CD4-positive, alpha-beta memory T cell (primary cell): ENCODE measurements at regions of chr10 and their contacts with region 1.

Region 1: DNA sequence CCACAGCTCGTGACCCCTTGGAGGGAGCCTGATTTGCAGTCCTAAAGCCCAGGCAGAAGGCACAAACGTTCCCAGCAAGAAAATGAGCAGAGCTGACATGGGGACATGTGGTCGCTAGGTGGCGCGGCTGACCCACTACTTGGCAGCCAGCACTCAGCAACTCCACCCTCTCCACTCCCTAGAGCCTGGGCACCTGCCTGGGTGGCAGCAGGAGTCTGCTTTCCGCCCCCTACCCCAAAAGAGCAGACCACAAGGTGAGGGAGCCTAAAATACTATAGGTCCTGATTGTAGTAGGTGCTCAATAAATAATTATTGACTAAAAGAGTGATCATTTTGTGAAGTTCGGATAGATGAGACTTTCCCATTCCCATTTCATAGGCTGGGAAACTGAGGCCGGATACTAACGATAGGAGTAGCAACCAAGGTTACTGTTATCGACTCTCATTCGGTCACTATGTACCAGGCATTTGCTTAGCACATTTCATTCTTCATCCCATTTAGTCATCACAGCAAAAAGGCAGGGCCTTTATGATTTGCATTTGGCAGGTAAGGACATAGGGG is 57.4 kb downstream of the NEUROG3 start:
- DNase-seq: peak; percentile 65 to 78 (median 74)
- H3K4me3 ChIP-seq: no peak overlapping the region
- H3K4me3 Mint-ChIP-seq: no peak overlapping the region
- H3K27ac ChIP-seq: no peak overlapping the region
- H3K27ac Mint-ChIP-seq: no peak overlapping the region
- H3K4me1 ChIP-seq: no peaks in the 10 kb centered on the region
- H3K4me1 Mint-ChIP-seq: no peaks in the 10 kb centered on the region
- H3K27me3 ChIP-seq: no peaks in the 10 kb centered on the region
- H3K27me3 Mint-ChIP-seq: peaks cover 2 to 6% of the 10 kb centered on the region in 2 donors

Region 2: DNA sequence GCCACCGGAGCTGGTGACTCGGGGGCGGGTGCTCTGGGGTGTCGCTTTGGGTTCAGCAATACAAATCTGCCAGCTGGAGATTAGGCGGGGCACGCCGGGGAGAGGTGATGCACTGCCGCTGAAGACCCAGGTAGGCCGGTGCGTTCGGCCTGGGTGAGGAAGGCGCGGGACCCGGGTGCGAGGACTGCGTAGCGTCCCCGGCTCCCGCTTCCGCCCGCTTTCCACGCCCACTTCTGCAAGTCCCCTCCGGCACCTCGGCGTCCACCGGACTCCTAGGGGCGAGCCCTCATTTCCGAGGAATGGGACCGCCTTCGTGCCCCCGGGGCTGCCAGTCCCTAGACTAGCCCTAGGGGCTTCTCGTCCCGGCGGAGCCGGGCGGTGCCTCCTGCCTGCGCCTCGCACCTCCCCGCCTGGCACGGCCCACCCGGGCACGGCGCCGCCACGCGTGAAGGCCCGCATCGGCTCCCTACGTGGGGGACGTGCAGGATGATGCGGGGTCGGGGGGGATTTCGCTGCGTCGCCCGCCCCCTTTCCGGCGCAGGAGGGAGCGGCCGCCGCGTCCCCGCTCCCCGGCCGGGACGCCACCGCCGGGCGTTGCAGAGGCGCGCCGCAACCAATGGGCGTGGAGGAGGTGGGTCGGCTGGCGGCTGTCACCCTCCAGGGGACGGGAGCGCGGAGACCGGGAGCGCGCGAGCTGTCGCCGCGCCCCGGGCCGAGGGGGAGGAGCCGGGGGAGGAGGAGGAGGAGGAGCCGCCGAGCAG is 197.5 kb before region 1 on chr10:
- CTCF ChIA-PET with region 1: no interaction called
- POLR2A ChIA-PET with region 1: no interaction called
- intact Hi-C with region 1: no loop called
- DNase-seq: peak; percentile 90 to 92 (median 91)
- H3K4me3 ChIP-seq: peak overlapping the region; percentile 66 to 99
- H3K4me3 Mint-ChIP-seq: peak overlapping the region; percentile 77 to 98 (median 95)
- H3K27ac ChIP-seq: peak overlapping the region; percentile 84
- H3K27ac Mint-ChIP-seq: peak overlapping the region; percentile 79 to 99 (median 84)
- H3K4me1 ChIP-seq: peaks cover 43% of the 10 kb centered on the region
- H3K4me1 Mint-ChIP-seq: peaks cover 23 to 52% (median 35%) of the 10 kb centered on the region in 4 donors
- H3K27me3 ChIP-seq: no peaks in the 10 kb centered on the region
- H3K27me3 Mint-ChIP-seq: no peaks in the 10 kb centered on the region

Region 3: GRCh38 chr10:69527961-69528360 is 12.2 kb after region 1 on chr10:
- CTCF ChIA-PET with region 1: interaction called, 14 read pairs
- POLR2A ChIA-PET with region 1: no interaction called
- intact Hi-C with region 1: no loop called
- DNase-seq: no peak
- H3K4me3 ChIP-seq: no peak overlapping the region
- H3K4me3 Mint-ChIP-seq: no peak overlapping the region
- H3K27ac ChIP-seq: no peak overlapping the region
- H3K27ac Mint-ChIP-seq: no peak overlapping the region
- H3K4me1 ChIP-seq: no peaks in the 10 kb centered on the region
- H3K4me1 Mint-ChIP-seq: no peaks in the 10 kb centered on the region
- H3K27me3 ChIP-seq: no peaks in the 10 kb centered on the region
- H3K27me3 Mint-ChIP-seq: peaks cover 2 to 6% of the 10 kb centered on the region in 2 donors

Region 4: GRCh38 chr10:69558559-69558958 is 42.8 kb after region 1 on chr10:
- CTCF ChIA-PET with region 1: no interaction called
- POLR2A ChIA-PET with region 1: no interaction called
- intact Hi-C with region 1: no loop called
- DNase-seq: peak in 3 of 5 donors; percentile 23 to 30 (median 29)
- H3K4me3 ChIP-seq: no peak overlapping the region
- H3K4me3 Mint-ChIP-seq: peak overlapping the region in 5 of 8 donors; percentile 11 to 63 (median 47)
- H3K27ac ChIP-seq: no peak overlapping the region
- H3K27ac Mint-ChIP-seq: peak overlapping the region in 2 of 7 donors; percentile 7 to 60
- H3K4me1 ChIP-seq: peaks cover 13% of the 10 kb centered on the region
- H3K4me1 Mint-ChIP-seq: peaks cover 12 to 18% (median 13%) of the 10 kb centered on the region in 4 donors
- H3K27me3 ChIP-seq: no peaks in the 10 kb centered on the region
- H3K27me3 Mint-ChIP-seq: peaks cover 9 to 10% of the 10 kb centered on the region in 2 donors

Region 5: GRCh38 chr10:69629897-69630650 is 114.3 kb after region 1 on chr10 and contains the start of gene FAM241B:
- CTCF ChIA-PET with region 1: interaction called, 338 read pairs
- POLR2A ChIA-PET with region 1: no interaction called
- intact Hi-C with region 1: no loop called
- DNase-seq: peak; percentile 75 to 81 (median 78)
- H3K4me3 ChIP-seq: peak within 1 kb of the TSS; percentile 49 to 69
- H3K4me3 Mint-ChIP-seq: peak within 1 kb of the TSS; percentile 63 to 81 (median 78)
- H3K27ac ChIP-seq: peak within 1 kb of the TSS; percentile 26
- H3K27ac Mint-ChIP-seq: peak within 1 kb of the TSS; percentile 51 to 81 (median 70)
- H3K4me1 ChIP-seq: peaks cover 25% of the 10 kb centered on the region
- H3K4me1 Mint-ChIP-seq: peaks cover 14 to 22% (median 18%) of the 10 kb centered on the region in 4 donors
- H3K27me3 ChIP-seq: no peaks in the 10 kb centered on the region
- H3K27me3 Mint-ChIP-seq: no peaks in the 10 kb centered on the region
- total RNA-seq, gene FAM241B: 9.4 to 10.7 TPM

Region 6: DNA sequence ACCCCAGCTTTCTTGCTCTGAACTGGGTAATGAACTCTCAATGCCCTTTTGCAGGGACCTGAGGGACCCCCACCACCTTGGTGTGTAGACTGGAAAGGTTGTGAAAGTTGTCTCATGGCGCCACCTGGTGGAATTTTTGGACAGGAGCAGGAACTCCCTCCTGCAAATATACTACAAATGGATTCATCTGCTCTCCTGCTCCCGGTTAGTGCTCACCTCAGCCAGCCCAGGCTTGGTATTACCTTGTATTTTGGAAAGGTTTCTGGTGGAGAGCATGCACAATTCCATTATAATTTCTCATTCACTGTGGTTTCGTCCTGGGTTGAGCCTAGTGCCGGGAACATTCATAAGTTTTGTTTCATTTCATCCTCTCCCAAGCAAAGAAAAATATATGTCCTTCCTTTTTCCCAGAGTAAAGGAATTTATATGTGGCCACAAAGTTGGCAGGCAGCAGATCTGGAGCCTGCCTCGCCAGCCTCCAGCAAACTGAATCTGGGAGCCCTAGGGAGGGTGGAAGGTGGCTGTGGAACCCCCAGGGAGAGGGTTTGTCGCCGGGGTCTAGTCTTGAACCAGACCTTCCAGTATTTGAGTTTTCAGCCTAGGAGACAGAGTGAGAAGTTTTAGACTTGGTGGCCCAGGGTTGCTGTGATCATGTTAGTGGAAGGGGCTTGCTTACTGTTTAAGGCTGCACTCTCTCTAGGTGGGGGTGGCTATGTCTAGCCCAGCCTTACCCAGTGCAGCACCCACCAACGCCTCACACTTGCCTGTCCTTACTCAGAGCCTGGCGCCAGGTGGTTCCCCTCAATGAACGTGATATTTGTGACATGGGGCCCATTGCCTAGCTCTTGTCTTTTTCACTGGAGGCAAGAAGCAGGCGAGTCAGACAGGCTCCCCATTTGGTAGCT is 123.8 kb after region 1 on chr10:
- CTCF ChIA-PET with region 1: interaction called, 338 read pairs
- POLR2A ChIA-PET with region 1: interaction called, 10 read pairs
- intact Hi-C with region 1: loop called (anchors 1 kb)
- DNase-seq: peak; percentile 67 to 73 (median 69)
- H3K4me3 ChIP-seq: no peak overlapping the region
- H3K4me3 Mint-ChIP-seq: no peak overlapping the region
- H3K27ac ChIP-seq: no peak overlapping the region
- H3K27ac Mint-ChIP-seq: peak overlapping the region in 1 of 7 donors; percentile 27
- H3K4me1 ChIP-seq: no peaks in the 10 kb centered on the region
- H3K4me1 Mint-ChIP-seq: peaks cover 0 to 4% (median 3%) of the 10 kb centered on the region in 4 donors
- H3K27me3 ChIP-seq: no peaks in the 10 kb centered on the region
- H3K27me3 Mint-ChIP-seq: peaks cover 0 to 2% of the 10 kb centered on the region in 2 donors

Region 7: GRCh38 chr10:69716711-69717560 is 201.2 kb after region 1 on chr10:
- CTCF ChIA-PET with region 1: interaction called, 28 read pairs
- POLR2A ChIA-PET with region 1: no interaction called
- intact Hi-C with region 1: loop called (anchors 1 kb)
- DNase-seq: peak; percentile 35 to 53 (median 38)
- H3K4me3 ChIP-seq: no peak overlapping the region
- H3K4me3 Mint-ChIP-seq: no peak overlapping the region
- H3K27ac ChIP-seq: no peak overlapping the region
- H3K27ac Mint-ChIP-seq: no peak overlapping the region
- H3K4me1 ChIP-seq: no peaks in the 10 kb centered on the region
- H3K4me1 Mint-ChIP-seq: no peaks in the 10 kb centered on the region
- H3K27me3 ChIP-seq: no peaks in the 10 kb centered on the region
- H3K27me3 Mint-ChIP-seq: peaks cover 0 to 4% of the 10 kb centered on the region in 2 donors

Region 8: GRCh38 chr10:69800109-69800508 is 284.3 kb after region 1 on chr10:
- CTCF ChIA-PET with region 1: no interaction called
- POLR2A ChIA-PET with region 1: no interaction called
- intact Hi-C with region 1: loop called (anchors 2 kb)
- DNase-seq: no peak
- H3K4me3 ChIP-seq: no peak overlapping the region
- H3K4me3 Mint-ChIP-seq: no peak overlapping the region
- H3K27ac ChIP-seq: no peak overlapping the region
- H3K27ac Mint-ChIP-seq: no peak overlapping the region
- H3K4me1 ChIP-seq: peaks cover 10% of the 10 kb centered on the region
- H3K4me1 Mint-ChIP-seq: peaks cover 2 to 16% (median 9%) of the 10 kb centered on the region in 4 donors
- H3K27me3 ChIP-seq: peaks cover 20% of the 10 kb centered on the region
- H3K27me3 Mint-ChIP-seq: peaks cover 30 to 55% of the 10 kb centered on the region in 2 donors

Region 9: DNA sequence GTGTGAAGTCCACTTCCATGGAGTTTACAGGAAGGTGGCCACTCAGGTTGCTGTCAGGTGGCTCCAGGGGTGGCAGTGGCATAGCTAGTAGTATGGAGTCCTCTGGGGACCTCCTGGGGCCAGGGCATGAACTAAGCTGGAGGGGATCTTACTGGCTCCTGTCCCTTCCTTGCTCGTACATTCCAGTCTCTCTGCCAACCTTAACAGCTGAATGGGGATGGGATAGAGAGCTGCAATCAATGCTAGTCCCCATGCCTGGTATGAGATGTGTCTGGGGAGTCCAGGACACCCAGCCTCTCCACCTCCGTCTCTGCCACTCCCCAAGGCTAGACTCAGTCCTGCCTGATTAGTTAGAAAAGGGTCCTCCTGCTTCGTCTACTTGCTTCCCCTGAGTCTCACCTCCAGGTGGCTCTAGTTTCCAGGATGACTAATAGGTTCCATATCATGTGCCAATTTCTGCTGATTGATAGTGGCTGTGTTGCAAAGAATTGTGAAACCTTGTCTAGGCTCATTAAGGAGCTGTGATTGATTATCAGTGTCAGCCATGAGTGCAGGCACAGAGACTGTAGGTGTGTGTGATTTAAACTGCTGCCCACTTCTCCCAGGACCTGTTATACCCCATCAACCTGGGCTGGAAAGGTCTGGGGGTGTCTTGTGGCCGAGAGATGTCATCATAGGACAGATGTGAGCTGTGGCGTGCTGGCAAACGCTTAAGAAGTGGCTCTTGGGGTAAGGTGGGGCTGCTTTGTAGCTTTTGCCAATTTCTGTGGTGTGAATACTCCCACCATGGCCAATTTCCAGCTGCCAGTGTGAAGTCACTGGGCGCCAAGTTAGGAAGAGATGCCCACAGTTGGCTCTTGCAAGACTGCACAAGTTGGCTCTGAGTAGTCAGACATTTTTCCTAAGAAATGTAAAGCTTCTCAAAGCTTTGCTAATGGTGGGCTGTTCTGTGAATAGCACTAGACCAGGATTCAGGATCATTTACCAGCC is 345.8 kb after region 1 on chr10:
- CTCF ChIA-PET with region 1: no interaction called
- POLR2A ChIA-PET with region 1: no interaction called
- intact Hi-C with region 1: no loop called
- DNase-seq: no peak
- H3K4me3 ChIP-seq: no peak overlapping the region
- H3K4me3 Mint-ChIP-seq: no peak overlapping the region
- H3K27ac ChIP-seq: no peak overlapping the region
- H3K27ac Mint-ChIP-seq: no peak overlapping the region
- H3K4me1 ChIP-seq: no peaks in the 10 kb centered on the region
- H3K4me1 Mint-ChIP-seq: no peaks in the 10 kb centered on the region
- H3K27me3 ChIP-seq: no peaks in the 10 kb centered on the region
- H3K27me3 Mint-ChIP-seq: peaks cover 6 to 7% of the 10 kb centered on the region in 2 donors

Region 10: GRCh38 chr10:69914398-69915214 is 398.8 kb after region 1 on chr10:
- CTCF ChIA-PET with region 1: interaction called, 4 read pairs
- POLR2A ChIA-PET with region 1: no interaction called
- intact Hi-C with region 1: loop called (anchors 5 kb)
- DNase-seq: peak in 4 of 5 donors; percentile 16 to 31 (median 26)
- H3K4me3 ChIP-seq: no peak overlapping the region
- H3K4me3 Mint-ChIP-seq: no peak overlapping the region
- H3K27ac ChIP-seq: no peak overlapping the region
- H3K27ac Mint-ChIP-seq: no peak overlapping the region
- H3K4me1 ChIP-seq: no peaks in the 10 kb centered on the region
- H3K4me1 Mint-ChIP-seq: no peaks in the 10 kb centered on the region
- H3K27me3 ChIP-seq: no peaks in the 10 kb centered on the region
- H3K27me3 Mint-ChIP-seq: peaks cover 2 to 12% of the 10 kb centered on the region in 2 donors